ENCODE measurements at regions of chr9 and their contacts with region 1.

Region 1: GRCh38 chr9:12972608-12973589 is 198.1 kb downstream of the LURAP1L start:
- DNase-seq: no peak
- ATAC-seq: no peak
- H3K4me3 ChIP-seq: no peak overlapping the region
- H3K27ac ChIP-seq: no peak overlapping the region
- H3K4me1 ChIP-seq: no peaks in the 10 kb centered on the region
- H3K27me3 ChIP-seq: no peaks in the 10 kb centered on the region
- CTCF ChIP-seq: no peak
- POLR2A ChIP-seq: no peak

Region 2: GRCh38 chr9:12916042-12916441 is 56.9 kb before region 1 on chr9:
- in situ Hi-C with region 1: loop called in 1 of 4 experiments (anchors 10 kb)
- intact Hi-C with region 1: no loop called
- DNase-seq: no peak
- ATAC-seq: no peak
- H3K4me3 ChIP-seq: no peak overlapping the region
- H3K27ac ChIP-seq: no peak overlapping the region
- H3K4me1 ChIP-seq: no peaks in the 10 kb centered on the region
- H3K27me3 ChIP-seq: no peaks in the 10 kb centered on the region
- CTCF ChIP-seq: no peak
- POLR2A ChIP-seq: no peak